Left cardiac atrium (tissue), 4 donors: ENCODE measurements at regions of chrX and their contacts with region 1.

Region 1: GRCh38 chrX:31658360-31658759 is 586.5 kb upstream of the FTHL17 start:
- DNase-seq: no peak
- ATAC-seq: no peak

Region 2: DNA sequence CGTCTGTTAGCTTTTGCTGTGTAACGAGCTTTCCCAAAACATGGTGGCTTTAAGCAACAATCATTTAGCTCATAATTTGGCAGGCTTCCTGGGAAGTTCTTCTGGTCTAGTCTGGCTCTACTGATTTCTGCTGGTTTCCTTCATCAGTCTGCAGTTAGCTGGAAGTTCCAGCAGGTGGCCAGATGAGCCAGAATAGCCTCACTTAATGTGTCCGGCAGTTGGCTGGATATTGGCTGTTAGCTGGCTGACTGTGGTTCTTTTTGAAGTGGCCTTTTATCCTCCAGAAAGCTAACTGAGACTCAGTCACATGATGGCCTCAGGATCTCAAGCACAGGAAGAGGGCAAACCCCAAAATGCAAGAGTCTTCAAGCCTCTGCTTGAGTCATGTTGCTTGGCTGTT is 621.5 kb before region 1 on chrX:
- intact Hi-C with region 1: loop called (anchors 5 to 10 kb)
- DNase-seq: peak; percentile 33
- ATAC-seq: peak; percentile 55 to 59

Region 3: DNA sequence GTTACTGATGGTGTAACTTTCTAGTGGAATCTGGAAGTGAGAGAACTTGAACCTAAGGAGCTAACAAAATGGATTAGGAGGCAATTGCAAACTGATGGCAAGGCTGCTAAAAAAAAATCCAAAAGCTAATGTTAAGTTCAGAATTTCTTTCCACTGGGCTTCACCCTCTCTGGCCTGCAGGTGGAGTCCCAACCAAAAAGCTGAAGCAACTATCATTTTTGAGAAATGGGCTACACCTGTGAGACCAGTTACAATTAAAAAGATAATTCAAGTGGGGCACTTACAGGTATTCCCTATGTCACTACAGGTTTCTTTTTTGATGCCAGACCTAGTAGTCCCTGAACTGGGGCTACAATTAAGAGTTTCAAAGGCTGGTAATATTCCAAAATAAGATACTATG is 444.4 kb before region 1 on chrX:
- intact Hi-C with region 1: loop called in 1 of 2 experiments (anchors 10 kb)
- DNase-seq: no peak
- ATAC-seq: peak in 1 of 2 donors; percentile 32

Region 4: GRCh38 chrX:31590581-31591113 is 67.7 kb before region 1 on chrX:
- intact Hi-C with region 1: no loop called
- DNase-seq: no peak
- ATAC-seq: no peak